Activated B cell treated with CpG ODN at 0.5 μM for 24 hours (primary cell): ENCODE measurements at regions of chr4 and their contacts with region 1.

Region 1: DNA sequence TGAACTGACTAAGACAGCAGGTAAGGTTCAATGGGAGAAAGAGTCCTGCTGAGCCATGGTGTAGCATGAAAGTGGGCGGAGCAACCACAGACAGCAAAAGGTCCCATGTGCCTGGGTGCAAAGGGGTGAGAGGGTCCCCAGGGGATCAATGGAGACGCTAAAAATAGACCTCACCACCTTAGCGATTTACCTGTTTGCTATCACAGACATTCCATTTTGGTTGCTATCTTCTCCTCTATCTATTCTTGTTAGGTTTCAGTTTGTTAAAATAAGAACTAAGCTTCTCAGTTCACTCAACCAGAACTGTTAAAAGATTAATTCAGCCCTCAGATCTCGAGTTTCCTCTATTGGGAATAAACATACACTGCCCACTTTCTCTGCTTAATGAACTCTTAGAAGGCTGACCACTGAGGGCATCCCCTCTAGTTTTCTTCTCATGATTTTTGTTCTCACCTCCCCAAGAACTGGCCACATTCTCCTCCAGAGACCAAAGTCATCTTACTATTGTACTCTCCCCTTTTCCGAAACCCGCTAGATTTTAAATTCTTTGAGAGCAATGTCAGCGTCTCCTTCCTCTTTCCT is 136.7 kb downstream of the PARM1 start:
- DNase-seq: no peak
- ATAC-seq: peak; percentile 82
- H3K4me3 Mint-ChIP-seq: peak overlapping the region; percentile 64
- H3K27ac Mint-ChIP-seq: no peak overlapping the region
- H3K4me1 Mint-ChIP-seq: peaks cover 21% of the 10 kb centered on the region
- H3K27me3 Mint-ChIP-seq: no peaks in the 10 kb centered on the region
- CTCF ChIP-seq: no peak

Region 2: DNA sequence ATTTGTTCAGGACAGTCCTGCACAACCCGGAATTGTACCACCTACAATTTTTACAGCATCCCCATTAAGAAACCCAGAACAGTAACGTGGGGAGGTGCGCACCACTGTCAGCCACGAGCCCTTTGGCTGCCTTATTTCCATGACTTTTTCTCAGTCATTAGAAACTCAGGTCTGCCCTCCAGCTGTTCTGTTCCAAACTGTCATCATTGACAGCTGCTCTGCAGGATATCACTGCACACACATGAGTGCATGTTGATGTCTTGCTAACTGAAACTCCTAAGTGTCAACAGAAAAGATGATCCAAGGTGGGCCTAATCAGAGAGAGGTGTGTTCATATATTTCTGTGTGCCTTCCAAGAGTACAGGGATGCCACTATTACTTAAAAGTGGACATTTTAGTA is 13.3 kb before region 1 on chr4:
- CTCF ChIA-PET with region 1: no interaction called
- POLR2A ChIA-PET with region 1: no interaction called
- intact Hi-C with region 1: no loop called
- DNase-seq: no peak
- ATAC-seq: no peak
- H3K4me3 Mint-ChIP-seq: no peak overlapping the region
- H3K27ac Mint-ChIP-seq: no peak overlapping the region
- H3K4me1 Mint-ChIP-seq: no peaks in the 10 kb centered on the region
- H3K27me3 Mint-ChIP-seq: no peaks in the 10 kb centered on the region
- CTCF ChIP-seq: no peak

Region 3: GRCh38 chr4:75101906-75102786 is 32.6 kb after region 1 on chr4:
- CTCF ChIA-PET with region 1: no interaction called
- POLR2A ChIA-PET with region 1: interaction called, 3 read pairs
- intact Hi-C with region 1: loop called (anchors 5 kb)
- DNase-seq: no peak
- ATAC-seq: peak; percentile 56
- H3K4me3 Mint-ChIP-seq: peak overlapping the region; percentile 49
- H3K27ac Mint-ChIP-seq: peak overlapping the region; percentile 87
- H3K4me1 Mint-ChIP-seq: peaks cover 58% of the 10 kb centered on the region
- H3K27me3 Mint-ChIP-seq: no peaks in the 10 kb centered on the region
- CTCF ChIP-seq: no peak

Region 4: DNA sequence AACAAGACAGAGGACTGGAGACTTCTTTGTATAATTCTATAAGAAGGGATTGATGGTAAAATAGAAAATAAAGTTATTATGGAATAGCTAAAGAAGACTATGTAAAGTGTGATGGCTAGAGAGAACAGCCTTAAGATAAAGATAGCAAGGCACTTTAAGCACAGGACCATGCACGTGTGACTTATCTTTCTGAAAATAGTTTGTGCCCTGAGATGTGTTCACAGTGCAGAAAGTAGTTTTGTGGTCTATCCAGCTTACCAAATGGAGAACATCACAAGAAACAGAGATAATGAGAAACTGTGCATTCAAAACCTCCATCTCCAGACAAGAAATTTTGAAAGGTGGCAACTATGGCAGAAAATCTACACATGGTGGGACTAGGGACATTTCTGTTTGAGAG is 76.6 kb after region 1 on chr4:
- CTCF ChIA-PET with region 1: no interaction called
- POLR2A ChIA-PET with region 1: no interaction called
- intact Hi-C with region 1: no loop called
- DNase-seq: no peak
- ATAC-seq: no peak
- H3K4me3 Mint-ChIP-seq: no peak overlapping the region
- H3K27ac Mint-ChIP-seq: no peak overlapping the region
- H3K4me1 Mint-ChIP-seq: peaks cover 19% of the 10 kb centered on the region
- H3K27me3 Mint-ChIP-seq: no peaks in the 10 kb centered on the region
- CTCF ChIP-seq: no peak